GM12878 (cell line): ENCODE measurements at regions of chr19 and their contacts with region 1.

Region 1: GRCh38 chr19:10742476-10742875 is 24.6 kb downstream of the DNM2 start:
- DNase-seq: no peak
- ATAC-seq: no peak
- H3K4me3 ChIP-seq: no peak overlapping the region
- H3K27ac ChIP-seq: no peak overlapping the region
- H3K4me1 ChIP-seq: peaks cover 10% of the 10 kb centered on the region
- H3K27me3 ChIP-seq: no peaks in the 10 kb centered on the region
- CTCF ChIP-seq: no peak
- EP300 ChIP-seq: no peak
- POLR2A ChIP-seq: no peak
- RAD21 ChIP-seq: no peak

Region 2: GRCh38 chr19:10730923-10731322 is 11.6 kb before region 1 on chr19:
- CTCF ChIA-PET with region 1: no interaction called
- POLR2A ChIA-PET with region 1: interaction called, 13 read pairs
- RAD21 ChIA-PET with region 1: no interaction called
- SMC1A ChIA-PET with region 1: interaction called, 3 read pairs
- in situ Hi-C with region 1: no loop called
- intact Hi-C with region 1: no loop called
- DNase-seq: no peak
- ATAC-seq: peak; percentile 62
- H3K4me3 ChIP-seq: peak overlapping the region; percentile 0; the same call in 1 of the 2 replicates
- H3K27ac ChIP-seq: peak overlapping the region; percentile 64
- H3K4me1 ChIP-seq: peaks cover 20% of the 10 kb centered on the region
- H3K27me3 ChIP-seq: no peaks in the 10 kb centered on the region
- CTCF ChIP-seq: no peak
- EP300 ChIP-seq: no peak
- POLR2A ChIP-seq: 0 out of 2 replicates have a peak, but pooled peaks have one; percentile 25
- RAD21 ChIP-seq: no peak

Region 3: DNA sequence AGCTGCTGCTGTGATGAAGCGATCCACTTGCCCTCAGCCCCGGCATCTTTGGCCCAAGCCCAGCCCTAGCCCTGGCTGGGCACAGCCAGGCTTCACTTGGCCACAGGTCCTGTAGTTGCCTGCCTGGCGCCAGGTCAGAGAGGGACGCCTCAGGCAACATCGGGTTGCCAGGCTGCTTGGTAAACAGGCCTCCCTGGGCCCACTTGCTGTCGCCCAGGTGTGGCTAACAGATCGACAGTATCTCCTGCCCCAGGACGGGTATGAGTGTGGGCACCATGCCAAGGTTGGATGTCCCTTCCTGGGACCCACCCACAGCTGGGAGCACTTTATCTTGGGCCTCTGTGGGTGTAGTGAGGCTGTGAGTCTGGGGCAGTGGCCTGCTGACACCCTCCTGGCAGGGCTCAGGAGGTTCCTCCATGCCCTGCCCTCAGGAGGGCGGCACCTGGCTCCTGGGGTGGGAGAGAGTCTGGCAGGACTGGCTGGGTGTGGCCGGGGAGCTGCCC is 156.7 kb after region 1 on chr19:
- CTCF ChIA-PET with region 1: no interaction called
- POLR2A ChIA-PET with region 1: no interaction called
- RAD21 ChIA-PET with region 1: no interaction called
- SMC1A ChIA-PET with region 1: no interaction called
- in situ Hi-C with region 1: no loop called
- intact Hi-C with region 1: no loop called
- DNase-seq: no peak
- ATAC-seq: no peak
- H3K4me3 ChIP-seq: no peak overlapping the region
- H3K27ac ChIP-seq: no peak overlapping the region
- H3K4me1 ChIP-seq: peaks cover 4% of the 10 kb centered on the region; the same call in 1 of the 2 replicates
- H3K27me3 ChIP-seq: no peaks in the 10 kb centered on the region
- CTCF ChIP-seq: no peak
- EP300 ChIP-seq: no peak
- POLR2A ChIP-seq: no peak
- RAD21 ChIP-seq: no peak